GM12878 (cell line): ENCODE measurements at regions of chr17 and their contacts with region 1.

Region 1: GRCh38 chr17:75667021-75667790 is at the starts of genes RECQL5 and SAP30BP:
- DNase-seq: peak; percentile 90
- ATAC-seq: peak; percentile 89
- H3K4me3 ChIP-seq: peak within 1 kb of the TSS; percentile 79
- H3K27ac ChIP-seq: peak within 1 kb of the TSS; percentile 81
- H3K4me1 ChIP-seq: peaks cover 23% of the 10 kb centered on the region
- H3K27me3 ChIP-seq: no peaks in the 10 kb centered on the region
- CTCF ChIP-seq: no peak
- EP300 ChIP-seq: peak in 1 of 2 experiments; percentile 24; a peak in 1 of 4 replicates
- POLR2A ChIP-seq: peak; percentile 90
- RAD21 ChIP-seq: no peak
- polyA plus RNA-seq, gene RECQL5: 3.6 to 6.4 TPM
- polyA plus RNA-seq, gene SAP30BP: 149 to 166 TPM

Region 2: GRCh38 chr17:75645889-75646637 is 21.1 kb before region 1 on chr17:
- CTCF ChIA-PET with region 1: interaction called, 13 read pairs
- POLR2A ChIA-PET with region 1: interaction called, 12 read pairs
- RAD21 ChIA-PET with region 1: interaction called, 4 read pairs
- SMC1A ChIA-PET with region 1: interaction called, 10 read pairs
- in situ Hi-C with region 1: no loop called
- intact Hi-C with region 1: no loop called
- DNase-seq: peak; percentile 42
- ATAC-seq: peak; percentile 100
- H3K4me3 ChIP-seq: no peak overlapping the region
- H3K27ac ChIP-seq: peak overlapping the region; percentile 69
- H3K4me1 ChIP-seq: peaks cover 14% of the 10 kb centered on the region
- H3K27me3 ChIP-seq: no peaks in the 10 kb centered on the region
- CTCF ChIP-seq: no peak
- EP300 ChIP-seq: peak in 1 of 2 experiments; percentile 25; a peak in 1 of 4 replicates
- POLR2A ChIP-seq: no peak
- RAD21 ChIP-seq: no peak

Region 3: GRCh38 chr17:75652915-75653549 is 14.2 kb before region 1 on chr17:
- CTCF ChIA-PET with region 1: interaction called, 13 read pairs
- POLR2A ChIA-PET with region 1: interaction called, 5 read pairs
- RAD21 ChIA-PET with region 1: interaction called, 4 read pairs
- SMC1A ChIA-PET with region 1: interaction called, 4 read pairs
- in situ Hi-C with region 1: no loop called
- intact Hi-C with region 1: no loop called
- DNase-seq: no peak
- ATAC-seq: peak; percentile 93
- H3K4me3 ChIP-seq: no peak overlapping the region
- H3K27ac ChIP-seq: 0 out of 2 replicates have a peak overlapping the region, but pooled peaks have one; percentile 18
- H3K4me1 ChIP-seq: peaks cover 5% of the 10 kb centered on the region; the same call in 1 of the 2 replicates
- H3K27me3 ChIP-seq: no peaks in the 10 kb centered on the region
- CTCF ChIP-seq: peak; percentile 71 to 95 (median 87)
- EP300 ChIP-seq: no peak
- POLR2A ChIP-seq: no peak
- RAD21 ChIP-seq: peak; percentile 49

Region 4: GRCh38 chr17:75689441-75689873 is 22.3 kb after region 1 on chr17:
- CTCF ChIA-PET with region 1: interaction called, 62 read pairs
- POLR2A ChIA-PET with region 1: interaction called, 7 read pairs
- RAD21 ChIA-PET with region 1: interaction called, 3 read pairs
- SMC1A ChIA-PET with region 1: interaction called, 10 read pairs
- in situ Hi-C with region 1: no loop called
- intact Hi-C with region 1: no loop called
- DNase-seq: peak; percentile 60
- ATAC-seq: peak; percentile 53
- H3K4me3 ChIP-seq: 0 out of 2 replicates have a peak overlapping the region, but pooled peaks have one; percentile 3
- H3K27ac ChIP-seq: peak overlapping the region; percentile 92
- H3K4me1 ChIP-seq: peaks cover 53% of the 10 kb centered on the region
- H3K27me3 ChIP-seq: no peaks in the 10 kb centered on the region
- CTCF ChIP-seq: no peak
- EP300 ChIP-seq: no peak
- POLR2A ChIP-seq: no peak
- RAD21 ChIP-seq: no peak